OCI-LY7 (cell line): ENCODE measurements at regions of chr5 and their contacts with region 1.

Region 1: DNA sequence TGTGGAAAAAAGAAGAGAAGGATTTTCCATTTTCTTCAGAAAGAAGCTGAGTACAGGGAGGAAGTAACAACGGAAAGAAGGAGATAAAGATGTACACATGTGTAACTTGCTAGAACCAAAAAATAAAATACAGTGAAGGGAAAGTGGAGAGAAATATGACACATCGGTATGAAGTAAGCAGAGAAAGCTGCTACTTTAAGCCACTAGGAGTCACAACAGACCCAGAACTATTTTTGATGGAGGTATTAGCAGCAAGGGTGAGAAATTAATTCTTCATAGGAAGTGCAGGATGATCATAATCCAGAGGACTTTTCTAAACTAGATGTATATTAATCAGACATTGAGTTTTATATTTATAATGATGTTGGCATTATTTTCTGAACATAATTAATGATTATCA is 88.5 kb downstream of the FAM174A start:
- DNase-seq: peak; percentile 46
- H3K4me3 ChIP-seq: no peak overlapping the region
- H3K27ac ChIP-seq: no peak overlapping the region
- H3K4me1 ChIP-seq: no peaks in the 10 kb centered on the region
- CTCF ChIP-seq: peak; percentile 80

Region 2: DNA sequence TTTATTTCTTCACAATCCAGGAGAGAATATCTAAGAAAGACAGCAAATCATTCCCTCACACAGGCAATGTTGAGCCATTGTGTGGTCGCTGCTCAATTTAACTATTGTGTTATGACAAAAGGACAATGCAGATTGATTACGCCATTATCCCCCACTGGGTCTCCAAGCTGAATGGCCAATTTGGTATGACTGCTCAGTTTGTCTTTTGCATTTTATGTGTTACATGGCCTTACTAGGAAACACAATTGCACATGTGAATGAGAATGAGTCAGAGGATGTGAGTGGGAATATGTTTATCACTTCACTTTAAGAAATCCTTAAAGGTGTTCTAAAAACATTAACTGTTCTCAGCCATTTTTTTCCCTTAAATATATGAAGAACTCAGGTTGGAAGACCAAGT is 19.8 kb after region 1 on chr5:
- CTCF ChIA-PET with region 1: no interaction called
- POLR2A ChIA-PET with region 1: no interaction called
- intact Hi-C with region 1: no loop called
- DNase-seq: no peak
- H3K4me3 ChIP-seq: no peak overlapping the region
- H3K27ac ChIP-seq: no peak overlapping the region
- H3K4me1 ChIP-seq: no peaks in the 10 kb centered on the region
- CTCF ChIP-seq: no peak

Region 3: DNA sequence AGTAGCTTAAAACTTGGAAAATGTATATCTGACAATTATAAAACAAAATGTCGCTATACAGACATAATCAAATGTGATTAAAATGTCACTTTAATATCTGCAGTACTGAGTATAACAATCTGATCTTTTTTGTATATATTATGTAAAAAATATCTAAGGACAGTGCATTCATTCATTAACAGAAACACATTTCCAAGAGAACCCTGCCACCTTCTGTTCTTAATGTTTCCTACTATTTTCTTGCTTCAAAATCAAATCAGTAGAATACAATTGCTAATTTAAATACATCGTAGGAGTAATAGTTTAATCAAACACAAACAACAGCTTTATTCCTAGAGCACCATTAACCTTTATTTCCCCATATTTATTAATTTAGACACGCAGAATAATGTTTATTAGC is 422.0 kb after region 1 on chr5:
- CTCF ChIA-PET with region 1: no interaction called
- POLR2A ChIA-PET with region 1: no interaction called
- intact Hi-C with region 1: loop called (anchors 5 kb)
- DNase-seq: peak; percentile 38
- H3K4me3 ChIP-seq: no peak overlapping the region
- H3K27ac ChIP-seq: no peak overlapping the region
- H3K4me1 ChIP-seq: no peaks in the 10 kb centered on the region
- CTCF ChIP-seq: peak; percentile 79

Region 4: DNA sequence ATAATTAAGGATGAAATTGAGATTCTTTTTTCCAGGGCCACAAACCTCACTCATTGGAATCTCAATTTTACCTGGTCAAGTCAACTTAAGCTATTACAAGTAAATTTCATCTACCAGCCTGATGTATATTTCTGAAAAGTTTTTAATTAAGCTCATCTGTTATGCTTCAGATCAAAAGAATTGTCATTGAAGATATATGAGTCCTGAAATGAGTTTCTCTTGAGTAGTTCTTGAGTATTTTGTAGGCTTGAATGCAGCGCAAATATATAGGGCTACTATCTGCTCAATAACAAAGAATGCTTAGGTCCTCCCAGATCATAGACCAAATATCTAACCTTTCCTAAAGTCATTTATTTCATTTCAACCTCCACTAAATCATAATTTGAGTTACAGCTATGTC is 761.6 kb after region 1 on chr5:
- CTCF ChIA-PET with region 1: no interaction called
- POLR2A ChIA-PET with region 1: no interaction called
- intact Hi-C with region 1: loop called (anchors 10 kb)
- DNase-seq: no peak
- H3K4me3 ChIP-seq: no peak overlapping the region
- H3K27ac ChIP-seq: no peak overlapping the region
- H3K4me1 ChIP-seq: no peaks in the 10 kb centered on the region
- CTCF ChIP-seq: no peak